ENCODE measurements at regions of chrX and their contacts with region 1.

Region 1: DNA sequence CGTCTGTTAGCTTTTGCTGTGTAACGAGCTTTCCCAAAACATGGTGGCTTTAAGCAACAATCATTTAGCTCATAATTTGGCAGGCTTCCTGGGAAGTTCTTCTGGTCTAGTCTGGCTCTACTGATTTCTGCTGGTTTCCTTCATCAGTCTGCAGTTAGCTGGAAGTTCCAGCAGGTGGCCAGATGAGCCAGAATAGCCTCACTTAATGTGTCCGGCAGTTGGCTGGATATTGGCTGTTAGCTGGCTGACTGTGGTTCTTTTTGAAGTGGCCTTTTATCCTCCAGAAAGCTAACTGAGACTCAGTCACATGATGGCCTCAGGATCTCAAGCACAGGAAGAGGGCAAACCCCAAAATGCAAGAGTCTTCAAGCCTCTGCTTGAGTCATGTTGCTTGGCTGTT is 34.9 kb downstream of the FTHL17 start:
- DNase-seq: no peak
- H3K4me3 Mint-ChIP-seq: no peak overlapping the region
- H3K27ac Mint-ChIP-seq: no peak overlapping the region
- H3K4me1 Mint-ChIP-seq: no peaks in the 10 kb centered on the region
- H3K27me3 Mint-ChIP-seq: peaks cover 4% of the 10 kb centered on the region

Region 2: DNA sequence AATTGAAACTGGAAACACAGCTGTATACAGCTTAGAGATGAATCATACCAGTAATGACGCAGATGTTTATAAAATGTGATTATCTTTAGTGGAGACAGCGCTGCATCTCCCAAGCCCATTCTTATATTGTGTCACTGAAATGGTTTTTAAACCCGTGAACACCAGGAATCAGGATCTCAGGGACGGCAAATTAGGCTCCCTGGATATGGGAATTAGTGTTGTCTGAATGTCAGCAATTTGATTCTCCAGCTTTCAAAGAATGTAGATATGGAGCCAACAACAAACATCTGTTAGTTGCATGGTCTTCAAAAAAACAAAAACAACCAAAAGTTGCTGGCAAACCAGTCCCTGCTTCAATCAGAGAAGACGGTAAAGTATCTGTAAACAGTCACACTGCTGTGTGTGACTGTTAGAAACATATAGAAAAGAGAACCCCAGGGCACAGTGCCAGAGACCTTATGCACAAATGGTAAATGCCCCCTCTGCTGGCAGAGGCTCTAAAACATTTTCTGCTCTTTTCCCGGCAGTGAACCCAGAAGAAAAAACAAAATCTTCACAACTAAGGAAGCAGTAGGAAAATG is 386.8 kb after region 1 on chrX:
- CTCF ChIA-PET with region 1: interaction called, 22 read pairs
- DNase-seq: no peak
- H3K4me3 Mint-ChIP-seq: no peak overlapping the region
- H3K27ac Mint-ChIP-seq: no peak overlapping the region
- H3K4me1 Mint-ChIP-seq: no peaks in the 10 kb centered on the region
- H3K27me3 Mint-ChIP-seq: no peaks in the 10 kb centered on the region

Region 3: DNA sequence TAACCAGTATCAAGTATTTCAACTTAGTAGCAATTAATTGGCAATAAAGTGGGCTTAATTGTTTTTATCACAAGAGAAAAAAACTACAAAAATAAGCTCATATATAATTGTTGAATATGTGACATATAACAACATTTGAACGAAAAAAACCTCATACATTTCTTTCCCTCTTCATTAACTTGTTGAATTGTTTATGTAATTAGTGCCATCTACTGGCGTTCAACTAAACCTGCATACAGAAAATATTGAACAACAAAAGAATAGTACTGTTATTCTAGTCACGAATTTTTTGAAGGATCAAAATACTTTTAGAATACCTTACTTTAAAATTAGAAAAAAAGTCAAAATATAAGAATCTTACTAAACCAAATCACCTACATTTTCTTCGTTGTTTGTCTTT is 621.5 kb after region 1 on chrX:
- CTCF ChIA-PET with region 1: interaction called, 29 read pairs
- DNase-seq: no peak
- H3K4me3 Mint-ChIP-seq: no peak overlapping the region
- H3K27ac Mint-ChIP-seq: no peak overlapping the region
- H3K4me1 Mint-ChIP-seq: no peaks in the 10 kb centered on the region
- H3K27me3 Mint-ChIP-seq: no peaks in the 10 kb centered on the region

Measured in activated naive CD4-positive, alpha-beta T cell treated with anti-CD3 and anti-CD28 coated beads, Interleukin-2, amount 10 ng/mL, durations not matched to agents 7 days and 5 days (primary cell).